CD8-positive, alpha-beta T cell (primary cell): ENCODE measurements at regions of chr15 and their contacts with region 1.

Region 1: DNA sequence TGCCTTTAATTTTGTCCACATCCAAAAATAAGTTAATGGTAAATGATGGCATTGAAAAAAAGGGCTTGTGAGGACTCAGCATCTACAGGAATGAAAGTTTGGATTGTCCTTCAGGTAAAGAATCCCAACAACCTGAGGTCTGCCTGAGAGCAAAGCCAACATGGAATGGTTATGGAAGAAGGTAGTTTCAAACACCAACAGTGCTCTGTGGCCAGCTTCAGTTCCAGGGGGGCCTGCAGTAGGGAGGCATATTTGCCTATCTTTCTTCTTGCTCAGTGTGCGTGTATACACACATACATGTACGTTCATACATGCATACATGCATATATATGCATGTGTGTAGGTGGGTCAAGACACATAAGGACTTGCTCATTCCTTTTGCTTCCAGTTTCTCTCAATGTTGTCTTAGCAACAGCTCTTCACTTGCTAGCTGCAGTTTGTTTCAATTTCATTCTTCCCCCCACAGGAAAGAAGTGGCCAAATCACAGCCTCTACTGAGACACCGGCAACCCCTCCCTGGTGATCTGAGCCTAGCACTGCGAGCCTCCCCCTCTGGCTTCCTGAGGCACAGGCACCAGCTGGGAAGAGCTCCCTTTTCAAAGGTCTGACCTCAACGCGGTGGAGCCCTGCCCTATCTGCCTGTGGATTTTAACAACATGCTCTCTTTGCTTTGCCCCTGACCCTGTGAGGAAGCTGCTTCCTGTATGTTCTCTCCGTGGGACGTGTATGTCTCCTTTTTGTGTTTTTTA is 146.2 kb downstream of the KLF13 start:
- DNase-seq: peak in 8 of 9 experiments; percentile 26 to 82 (median 57)
- ATAC-seq: peak; percentile 84
- H3K4me3 ChIP-seq: peak overlapping the region; percentile 24 to 28
- H3K4me3 Mint-ChIP-seq: peak overlapping the region; percentile 79
- H3K27ac ChIP-seq: peak overlapping the region; percentile 52 to 78
- H3K27ac Mint-ChIP-seq: peak overlapping the region; percentile 96
- H3K4me1 ChIP-seq: peaks cover 39% of the 10 kb centered on the region
- H3K4me1 Mint-ChIP-seq: peaks cover 59% of the 10 kb centered on the region
- H3K27me3 ChIP-seq: no peaks in the 10 kb centered on the region
- H3K27me3 Mint-ChIP-seq: no peaks in the 10 kb centered on the region
- CTCF ChIP-seq: no peak

Region 2: DNA sequence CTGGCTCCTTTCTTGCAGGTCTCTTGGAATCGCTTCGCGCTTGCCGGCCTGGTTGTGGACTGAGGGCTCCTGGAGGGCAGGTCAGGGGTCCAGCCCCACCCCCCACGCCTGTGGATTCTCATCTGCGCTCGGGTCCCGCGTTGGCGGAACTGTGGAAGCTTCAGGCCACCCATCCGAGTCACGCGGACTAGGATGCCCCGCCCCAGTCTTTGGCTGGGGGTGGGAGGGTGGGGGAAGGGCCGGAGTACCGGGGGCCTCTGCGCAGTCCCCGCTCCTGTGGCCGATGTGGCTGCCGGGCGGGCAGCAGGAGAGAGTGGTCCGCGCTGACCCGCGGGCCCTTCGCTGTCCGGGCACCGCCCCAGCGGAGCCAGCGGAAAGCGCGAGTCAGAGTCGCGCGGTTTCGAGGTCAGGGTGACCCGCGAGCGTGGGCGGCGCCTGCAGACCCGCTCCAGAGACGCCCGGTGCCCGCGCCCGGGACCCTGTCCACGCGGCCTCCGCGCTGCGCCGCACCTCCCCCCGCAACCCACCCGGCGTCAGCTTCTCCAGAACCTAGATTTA is 32.0 kb before region 1 on chr15:
- CTCF ChIA-PET with region 1: interaction called, 19 read pairs
- POLR2A ChIA-PET with region 1: interaction called, 18 read pairs
- intact Hi-C with region 1: no loop called
- DNase-seq: peak in 6 of 9 experiments; percentile 41 to 72 (median 46)
- ATAC-seq: peak; percentile 36
- H3K4me3 ChIP-seq: peak overlapping the region; percentile 47 to 57
- H3K4me3 Mint-ChIP-seq: peak overlapping the region; percentile 64
- H3K27ac ChIP-seq: peak overlapping the region; percentile 45 to 53
- H3K27ac Mint-ChIP-seq: peak overlapping the region; percentile 79
- H3K4me1 ChIP-seq: peaks cover 56% of the 10 kb centered on the region
- H3K4me1 Mint-ChIP-seq: peaks cover 60% of the 10 kb centered on the region
- H3K27me3 ChIP-seq: no peaks in the 10 kb centered on the region
- H3K27me3 Mint-ChIP-seq: no peaks in the 10 kb centered on the region
- CTCF ChIP-seq: no peak

Region 3: GRCh38 chr15:31458591-31459399 is 14.0 kb before region 1 on chr15:
- CTCF ChIA-PET with region 1: interaction called, 10 read pairs
- POLR2A ChIA-PET with region 1: interaction called, 8 read pairs
- intact Hi-C with region 1: no loop called
- DNase-seq: peak in 2 of 9 experiments; percentile 26 to 62
- ATAC-seq: peak; percentile 86
- H3K4me3 ChIP-seq: no peak overlapping the region
- H3K4me3 Mint-ChIP-seq: peak overlapping the region; percentile 4
- H3K27ac ChIP-seq: no peak overlapping the region
- H3K27ac Mint-ChIP-seq: peak overlapping the region; percentile 70
- H3K4me1 ChIP-seq: peaks cover 8% of the 10 kb centered on the region
- H3K4me1 Mint-ChIP-seq: peaks cover 20% of the 10 kb centered on the region
- H3K27me3 ChIP-seq: no peaks in the 10 kb centered on the region
- H3K27me3 Mint-ChIP-seq: no peaks in the 10 kb centered on the region
- CTCF ChIP-seq: no peak

Region 4: GRCh38 chr15:31483053-31483985 is 10.5 kb after region 1 on chr15:
- CTCF ChIA-PET with region 1: interaction called, 45 read pairs
- POLR2A ChIA-PET with region 1: interaction called, 37 read pairs
- intact Hi-C with region 1: no loop called
- DNase-seq: peak; percentile 15 to 83 (median 60)
- ATAC-seq: peak; percentile 58
- H3K4me3 ChIP-seq: peak overlapping the region; percentile 60 to 67
- H3K4me3 Mint-ChIP-seq: peak overlapping the region; percentile 95
- H3K27ac ChIP-seq: peak overlapping the region in 1 of 2 experiments; percentile 59
- H3K27ac Mint-ChIP-seq: peak overlapping the region; percentile 97
- H3K4me1 ChIP-seq: peaks cover 44% of the 10 kb centered on the region
- H3K4me1 Mint-ChIP-seq: peaks cover 66% of the 10 kb centered on the region
- H3K27me3 ChIP-seq: peaks cover 0 to 3% of the 10 kb centered on the region in 2 experiments
- H3K27me3 Mint-ChIP-seq: no peaks in the 10 kb centered on the region
- CTCF ChIP-seq: no peak